Vagina (tissue), 2 donors: ENCODE measurements at regions of chr2 and their contacts with region 1.

Region 1: DNA sequence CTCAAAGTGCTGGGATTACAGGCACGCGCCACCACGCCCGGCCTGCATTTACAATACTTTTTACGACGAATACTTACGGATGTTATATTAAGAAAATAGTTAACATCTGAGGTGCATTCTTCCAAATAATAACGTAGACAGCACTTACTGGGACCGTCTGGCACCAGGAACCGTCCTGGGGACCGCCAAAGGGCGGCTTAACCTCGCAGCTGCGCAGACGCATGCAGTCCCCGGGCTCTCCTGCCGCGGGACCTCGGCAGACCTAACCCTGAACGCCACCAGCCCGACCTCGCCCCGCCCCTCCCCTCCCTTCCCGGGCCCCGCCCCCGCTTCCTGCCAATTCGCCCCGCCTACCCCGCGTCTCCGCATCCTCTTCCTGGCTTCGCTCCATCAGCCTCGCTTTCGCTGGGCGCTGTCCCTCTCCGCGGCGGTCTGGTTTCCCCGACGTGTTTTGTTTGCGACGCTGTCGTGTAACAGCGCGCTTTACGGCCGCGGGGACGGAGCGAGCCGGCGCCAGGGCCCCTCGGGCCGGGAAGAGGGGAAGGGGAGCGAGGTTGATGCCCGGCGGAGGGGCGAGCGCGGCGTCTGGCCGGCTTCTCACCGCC is at the start of gene CNOT11:
- DNase-seq: peak; percentile 96 to 97
- H3K4me3 ChIP-seq: peak within 1 kb of the TSS; percentile 76 to 87
- H3K27ac ChIP-seq: peak within 1 kb of the TSS; percentile 89
- H3K4me1 ChIP-seq: peaks cover 30% of the 10 kb centered on the region
- H3K27me3 ChIP-seq: no peaks in the 10 kb centered on the region
- CTCF ChIP-seq: no peak
- POLR2A ChIP-seq: peak in 1 of 2 donors; percentile 48
- total RNA-seq, gene CNOT11: 20.1 TPM

Region 2: DNA sequence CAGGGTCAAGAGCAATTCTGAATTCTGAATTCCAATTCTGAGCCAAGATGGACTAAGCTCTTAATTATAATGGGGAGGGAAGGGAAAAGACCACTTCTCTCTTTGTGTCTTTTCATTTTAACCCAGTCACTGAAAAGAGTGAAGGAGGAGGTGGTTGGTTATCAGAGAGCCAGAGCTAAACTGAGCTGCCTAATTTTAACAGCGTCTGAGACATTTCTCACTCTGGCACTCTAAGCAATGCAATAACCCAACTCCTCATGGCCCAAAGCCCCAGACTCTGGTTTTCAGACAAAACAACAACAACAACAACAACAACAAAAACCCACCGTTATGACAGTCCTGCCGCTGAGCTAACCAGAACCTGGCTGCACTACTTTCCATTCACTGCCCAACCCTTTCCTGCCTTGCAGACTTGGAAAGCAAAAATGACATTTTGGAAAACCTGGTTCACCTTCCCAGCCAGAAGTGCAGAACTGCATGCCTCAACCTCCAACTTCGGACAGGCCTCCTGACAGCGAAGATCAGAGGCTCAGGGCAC is 836.0 kb before region 1 on chr2:
- intact Hi-C with region 1: no loop called
- DNase-seq: no peak
- H3K4me3 ChIP-seq: peak overlapping the region; percentile 73 to 76
- H3K27ac ChIP-seq: peak overlapping the region; percentile 79
- H3K4me1 ChIP-seq: peaks cover 30% of the 10 kb centered on the region
- H3K27me3 ChIP-seq: no peaks in the 10 kb centered on the region
- CTCF ChIP-seq: no peak
- POLR2A ChIP-seq: no peak

Region 3: DNA sequence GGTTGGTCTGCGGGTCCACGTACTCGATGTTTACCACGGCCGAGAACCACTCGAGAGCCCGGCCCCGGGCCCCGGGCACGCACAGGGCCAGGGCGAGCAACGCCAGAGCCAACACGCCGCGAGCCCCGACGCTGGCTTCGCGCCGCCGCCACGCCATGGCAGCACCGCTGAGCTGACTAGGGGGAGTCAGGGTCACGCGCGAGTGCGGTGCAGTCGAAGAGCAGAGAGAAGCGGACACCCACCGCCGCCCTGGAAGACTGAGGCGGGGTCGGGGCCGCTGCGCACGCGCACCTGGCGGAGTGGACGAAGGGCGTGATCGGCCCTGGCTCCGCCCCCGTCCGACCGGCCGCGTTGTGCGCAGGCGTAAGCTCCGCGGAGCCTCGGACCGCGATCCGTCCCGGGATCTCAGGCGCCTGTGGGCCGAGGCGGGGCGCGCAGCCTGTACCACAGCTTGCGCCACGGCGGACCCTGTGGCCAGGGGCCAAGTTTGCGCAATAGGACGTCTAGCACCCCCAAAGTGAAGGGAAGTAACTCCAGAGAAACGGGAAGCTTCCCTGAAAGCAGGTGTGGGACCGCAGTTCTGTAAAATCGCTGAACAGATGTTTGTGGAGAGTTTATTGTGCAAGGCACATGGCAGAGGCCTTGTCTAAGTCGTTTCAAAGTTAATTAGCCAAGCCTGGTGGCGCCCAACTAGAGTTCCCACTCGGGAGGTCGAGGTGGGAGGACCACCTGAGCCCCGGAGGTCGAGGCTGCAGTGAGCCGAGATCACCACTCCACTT is 56.1 kb after region 1 on chr2 and contains the start of gene RNF149:
- intact Hi-C with region 1: loop called (anchors 10 kb)
- DNase-seq: peak in 1 of 2 donors; percentile 95
- H3K4me3 ChIP-seq: peak within 1 kb of the TSS; percentile 65 to 78
- H3K27ac ChIP-seq: peak within 1 kb of the TSS; percentile 87
- H3K4me1 ChIP-seq: peaks cover 42% of the 10 kb centered on the region
- H3K27me3 ChIP-seq: no peaks in the 10 kb centered on the region
- CTCF ChIP-seq: peak in 1 of 3 experiments; percentile 26
- POLR2A ChIP-seq: peak; percentile 72 to 97
- total RNA-seq, gene RNF149: 89.4 TPM